Heart right ventricle (tissue), 16 donors: ENCODE measurements at regions of chr1 and their contacts with region 1.

Region 1: GRCh38 chr1:12269351-12269750 is 39.5 kb downstream of the VPS13D start:
- DNase-seq: no peak
- ATAC-seq: no peak
- H3K4me3 ChIP-seq: no peak overlapping the region
- H3K27ac ChIP-seq: no peak overlapping the region
- H3K4me1 ChIP-seq: peaks cover 0 to 9% (median 0%) of the 10 kb centered on the region in 9 donors
- H3K27me3 ChIP-seq: no peaks in the 10 kb centered on the region
- CTCF ChIP-seq: no peak

Region 2: GRCh38 chr1:12166834-12167492 is 102.4 kb before region 1 on chr1 and contains the start of gene TNFRSF1B:
- intact Hi-C with region 1: no loop called
- DNase-seq: peak; percentile 67 to 82
- ATAC-seq: peak; percentile 46 to 86 (median 64)
- H3K4me3 ChIP-seq: peak within 1 kb of the TSS; percentile 73 to 94 (median 83)
- H3K27ac ChIP-seq: peak within 1 kb of the TSS; percentile 80 to 99 (median 94)
- H3K4me1 ChIP-seq: peaks cover 9 to 89% (median 56%) of the 10 kb centered on the region in 9 donors
- H3K27me3 ChIP-seq: peaks cover 0 to 8% (median 0%) of the 10 kb centered on the region in 7 donors
- CTCF ChIP-seq: no peak
- total RNA-seq, gene TNFRSF1B: 8.0 to 55.4 (median 15.7) TPM

Region 3: GRCh38 chr1:12359359-12360133 is 90.2 kb after region 1 on chr1:
- intact Hi-C with region 1: loop called in 1 of 10 experiments (anchors 10 kb)
- DNase-seq: no peak
- ATAC-seq: peak in 3 of 8 donors; percentile 34 to 55 (median 42)
- H3K4me3 ChIP-seq: no peak overlapping the region
- H3K27ac ChIP-seq: peak overlapping the region in 1 of 10 donors; percentile 6
- H3K4me1 ChIP-seq: peaks cover 0 to 38% (median 16%) of the 10 kb centered on the region in 9 donors
- H3K27me3 ChIP-seq: no peaks in the 10 kb centered on the region
- CTCF ChIP-seq: no peak